Breast epithelium (tissue), 4 donors: ENCODE measurements at regions of chr14 and their contacts with region 1.

Region 1: DNA sequence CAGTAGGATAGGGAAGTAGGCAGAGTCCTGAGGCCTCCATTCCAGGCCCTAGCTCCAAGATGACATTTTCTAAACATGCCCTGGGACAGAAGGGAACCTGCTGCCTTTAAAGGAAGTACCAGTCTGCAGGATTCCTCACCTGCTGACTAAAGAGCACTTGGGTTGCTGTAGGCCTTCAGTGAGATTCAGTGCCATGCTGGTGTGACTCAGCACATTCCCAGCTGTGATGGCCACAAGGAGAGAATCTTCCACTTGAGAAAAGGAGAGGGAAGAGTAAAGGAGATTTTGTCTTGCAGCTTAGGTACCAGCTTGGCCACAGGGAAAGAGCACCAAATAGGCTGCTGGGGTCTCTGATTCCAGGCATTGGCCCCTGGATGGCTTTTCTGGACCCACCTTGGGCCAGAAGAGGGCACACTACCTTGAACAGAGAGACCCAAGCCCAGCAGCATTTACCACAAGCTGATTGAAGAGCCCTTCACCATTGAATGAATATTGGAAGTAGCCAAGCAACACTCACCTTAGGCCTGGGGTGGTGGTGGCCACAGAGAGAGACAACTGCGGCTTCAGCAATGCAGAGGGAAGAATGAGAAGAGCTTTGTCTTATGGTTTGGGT is 498.3 kb downstream of the KCNH5 start:
- DNase-seq: no peak
- H3K4me3 ChIP-seq: no peak overlapping the region
- H3K27ac ChIP-seq: no peak overlapping the region
- H3K4me1 ChIP-seq: no peaks in the 10 kb centered on the region
- H3K27me3 ChIP-seq: no peaks in the 10 kb centered on the region
- CTCF ChIP-seq: no peak
- POLR2A ChIP-seq: no peak

Region 2: DNA sequence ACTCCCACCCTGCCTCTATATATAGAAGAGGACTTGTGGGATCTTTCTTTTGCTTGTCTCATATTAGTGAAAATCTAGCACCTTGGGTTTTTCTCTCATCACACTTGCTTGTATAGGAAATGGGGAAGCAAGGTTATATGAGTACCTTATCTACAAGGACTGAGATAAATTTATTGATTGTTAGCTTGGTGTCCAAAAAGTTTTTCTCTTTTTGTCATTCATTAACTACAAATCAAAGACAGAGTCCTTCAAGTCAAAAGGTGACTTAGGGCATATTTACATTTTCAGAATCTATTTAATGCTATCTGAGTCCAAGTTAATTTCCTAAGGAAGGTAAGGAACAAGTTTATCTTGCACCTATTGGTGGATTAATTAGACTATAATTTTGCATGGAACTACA is 692.1 kb before region 1 on chr14:
- intact Hi-C with region 1: loop called (anchors 5 kb)
- DNase-seq: no peak
- H3K4me3 ChIP-seq: no peak overlapping the region
- H3K27ac ChIP-seq: no peak overlapping the region
- H3K4me1 ChIP-seq: no peaks in the 10 kb centered on the region
- H3K27me3 ChIP-seq: no peaks in the 10 kb centered on the region
- CTCF ChIP-seq: no peak
- POLR2A ChIP-seq: no peak

Region 3: DNA sequence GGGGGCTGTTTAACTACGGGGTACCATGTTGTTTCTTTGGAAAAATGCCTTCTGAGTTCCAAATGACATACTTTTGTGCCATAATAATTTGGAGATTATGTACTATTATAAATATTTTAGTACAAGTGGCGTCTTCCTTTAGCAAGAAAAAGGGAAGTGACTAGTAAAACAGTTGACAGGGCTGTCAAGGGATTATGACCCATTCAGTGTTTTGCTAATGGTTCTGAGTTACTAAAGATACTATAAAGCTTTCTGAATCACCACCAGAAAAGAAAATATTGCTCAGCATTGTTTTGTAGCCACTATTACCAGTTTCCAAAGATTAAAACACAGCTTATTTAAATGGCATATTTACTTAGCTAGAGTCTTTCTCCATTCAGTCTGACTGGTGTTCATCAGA is 449.9 kb before region 1 on chr14:
- intact Hi-C with region 1: no loop called
- DNase-seq: no peak
- H3K4me3 ChIP-seq: no peak overlapping the region
- H3K27ac ChIP-seq: no peak overlapping the region
- H3K4me1 ChIP-seq: no peaks in the 10 kb centered on the region
- H3K27me3 ChIP-seq: no peaks in the 10 kb centered on the region
- CTCF ChIP-seq: no peak
- POLR2A ChIP-seq: no peak

Region 4: GRCh38 chr14:62301911-62302310 is 245.1 kb before region 1 on chr14:
- intact Hi-C with region 1: loop called (anchors 5 kb)
- DNase-seq: no peak
- H3K4me3 ChIP-seq: no peak overlapping the region
- H3K27ac ChIP-seq: no peak overlapping the region
- H3K4me1 ChIP-seq: no peaks in the 10 kb centered on the region
- H3K27me3 ChIP-seq: no peaks in the 10 kb centered on the region
- CTCF ChIP-seq: no peak
- POLR2A ChIP-seq: no peak

Region 5: DNA sequence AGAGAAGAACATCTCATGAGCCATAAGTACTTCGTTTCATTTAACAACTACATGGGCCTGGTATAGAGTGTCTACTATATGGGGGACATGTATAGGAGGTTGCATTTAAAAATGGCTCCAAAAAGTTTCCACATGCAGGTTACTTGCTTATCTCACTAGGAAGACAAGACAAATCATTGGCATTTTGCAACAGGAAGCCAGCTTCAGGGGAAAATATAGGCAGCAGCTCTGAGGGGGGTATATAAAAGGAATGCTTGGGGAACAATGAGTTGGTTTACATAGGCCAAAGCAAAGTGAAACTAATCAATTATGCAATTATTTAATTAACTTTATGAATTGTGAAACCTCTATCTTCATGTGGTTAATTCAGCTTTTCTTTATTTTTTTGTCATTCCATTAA is 273.0 kb after region 1 on chr14:
- intact Hi-C with region 1: no loop called
- DNase-seq: no peak
- H3K4me3 ChIP-seq: no peak overlapping the region
- H3K27ac ChIP-seq: no peak overlapping the region
- H3K4me1 ChIP-seq: no peaks in the 10 kb centered on the region
- H3K27me3 ChIP-seq: no peaks in the 10 kb centered on the region
- CTCF ChIP-seq: no peak
- POLR2A ChIP-seq: no peak

Region 6: GRCh38 chr14:63770187-63770807 is 1223.3 kb after region 1 on chr14:
- intact Hi-C with region 1: no loop called
- DNase-seq: no peak
- H3K4me3 ChIP-seq: no peak overlapping the region
- H3K27ac ChIP-seq: no peak overlapping the region
- H3K4me1 ChIP-seq: no peaks in the 10 kb centered on the region
- H3K27me3 ChIP-seq: no peaks in the 10 kb centered on the region
- CTCF ChIP-seq: peak in 2 of 3 donors; percentile 42 to 58
- POLR2A ChIP-seq: no peak